ENCODE measurements at regions of chr4 and their contacts with region 1.

Region 1: GRCh38 chr4:40439519-40439918 is 104.4 kb downstream of the CHRNA9 start:
- H3K4me3 ChIP-seq: no peak overlapping the region
- H3K27ac ChIP-seq: no peak overlapping the region
- H3K4me1 ChIP-seq: no peaks in the 10 kb centered on the region
- CTCF ChIP-seq: no peak

Region 2: DNA sequence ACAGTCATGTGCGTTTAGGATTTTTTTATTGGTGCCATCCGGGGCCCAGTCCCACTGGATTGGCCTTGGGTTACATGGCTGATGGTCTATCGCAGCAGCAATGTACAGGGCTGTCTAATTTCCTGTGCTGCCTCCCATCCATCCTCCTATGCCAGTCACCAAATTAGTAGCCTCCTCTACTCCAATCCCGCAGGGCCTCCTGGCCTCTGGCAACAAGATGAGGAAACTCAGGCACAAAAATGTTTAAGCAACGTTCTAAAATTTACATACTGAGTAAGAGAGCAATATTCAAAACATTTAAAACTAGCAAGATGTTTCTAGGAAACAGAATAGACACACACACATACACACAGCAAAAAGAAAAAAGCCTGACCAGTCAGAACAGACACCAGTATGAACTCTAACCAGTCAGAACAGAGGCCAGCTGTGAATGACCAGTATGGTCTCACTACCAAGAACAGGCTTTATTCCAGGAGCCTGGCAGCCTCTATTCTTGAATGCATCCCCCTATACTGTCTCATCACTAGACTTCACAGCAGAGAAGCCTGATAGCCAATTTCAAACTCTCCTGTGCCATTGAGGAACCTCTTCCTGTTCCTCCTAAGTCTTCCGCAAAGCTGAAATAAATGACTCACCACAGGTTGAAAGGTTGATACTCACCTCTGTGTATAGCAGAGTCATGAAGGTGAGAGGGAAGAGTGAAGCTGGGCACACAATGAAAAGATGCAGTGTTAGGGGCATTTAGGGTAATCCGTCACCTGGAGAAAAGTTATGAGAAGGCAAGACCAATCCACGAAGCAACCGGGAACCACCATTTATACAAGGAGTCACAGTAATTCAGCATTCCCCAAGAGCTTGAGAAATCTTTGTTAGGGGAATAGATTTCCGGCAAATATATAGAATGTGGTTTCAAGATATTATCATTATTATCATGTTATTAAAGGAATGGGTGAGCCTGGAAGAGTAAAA is 61.7 kb before region 1 on chr4:
- CTCF ChIA-PET with region 1: no interaction called
- POLR2A ChIA-PET with region 1: no interaction called
- H3K4me3 ChIP-seq: no peak overlapping the region
- H3K27ac ChIP-seq: no peak overlapping the region
- H3K4me1 ChIP-seq: no peaks in the 10 kb centered on the region
- CTCF ChIP-seq: no peak

Region 3: GRCh38 chr4:40656201-40656901 is 216.8 kb after region 1 on chr4:
- CTCF ChIA-PET with region 1: interaction called, 11 read pairs
- POLR2A ChIA-PET with region 1: no interaction called
- H3K4me3 ChIP-seq: no peak overlapping the region
- H3K27ac ChIP-seq: no peak overlapping the region
- H3K4me1 ChIP-seq: no peaks in the 10 kb centered on the region
- CTCF ChIP-seq: no peak

Measured in HEK293 (cell line).